ENCODE measurements at regions of chr16 and their contacts with region 1.

Region 1: DNA sequence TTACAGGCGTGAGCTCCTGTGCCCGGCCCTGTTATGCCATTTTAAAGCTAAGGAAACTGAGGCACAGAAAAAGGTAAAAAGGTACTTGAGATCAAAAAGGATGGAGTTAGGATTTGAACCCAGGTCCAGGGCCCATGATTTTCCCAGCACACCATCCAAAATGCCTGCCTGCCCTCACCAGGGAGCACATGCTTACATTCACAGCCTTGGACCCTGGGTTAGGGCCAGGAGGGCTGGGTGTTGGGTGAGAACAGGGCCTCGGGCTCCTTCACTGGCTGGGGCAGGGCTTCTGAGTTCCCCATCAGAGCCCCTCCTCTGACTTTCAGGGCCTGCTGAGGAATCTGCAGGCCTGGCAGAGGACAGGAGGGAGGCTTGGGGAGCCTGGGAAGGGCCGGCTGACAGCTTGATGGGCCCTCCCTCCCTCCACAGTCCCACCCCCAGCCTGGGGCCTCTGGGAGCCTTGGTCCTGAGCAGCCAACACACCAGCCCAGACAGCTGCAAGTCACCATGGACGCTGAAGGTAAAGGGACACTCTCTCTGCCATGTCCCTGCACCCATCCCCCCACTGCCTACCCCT is at the start of gene QPRT:
- DNase-seq: peak; percentile 85
- ATAC-seq: peak; percentile 91
- H3K4me3 ChIP-seq: peak within 1 kb of the TSS; percentile 76 to 91 (median 81)
- H3K27ac ChIP-seq: peak within 1 kb of the TSS; percentile 99
- H3K4me1 ChIP-seq: peaks cover 51% of the 10 kb centered on the region
- H3K27me3 ChIP-seq: no peaks in the 10 kb centered on the region; a peak in 1 of 5 replicates
- CTCF ChIP-seq: no peak
- EP300 ChIP-seq: no peak
- POLR2A ChIP-seq: peak; percentile 89 to 95
- RAD21 ChIP-seq: peak; percentile 44; the same call in 1 of the 2 replicates
- total RNA-seq, gene QPRT: 218 and 244 TPM in 2 replicates

Region 2: GRCh38 chr16:29645694-29646187 is 33.0 kb before region 1 on chr16:
- CTCF ChIA-PET with region 1: no interaction called
- POLR2A ChIA-PET with region 1: interaction called, 19 read pairs
- in situ Hi-C with region 1: no loop called
- intact Hi-C with region 1: no loop called
- DNase-seq: peak; percentile 89
- ATAC-seq: peak; percentile 87
- H3K4me3 ChIP-seq: peak overlapping the region in 1 of 3 experiments; percentile 14; a peak in 2 of 6 replicates
- H3K27ac ChIP-seq: peak overlapping the region; percentile 43
- H3K4me1 ChIP-seq: peaks cover 47% of the 10 kb centered on the region
- H3K27me3 ChIP-seq: no peaks in the 10 kb centered on the region; a peak in 1 of 5 replicates
- CTCF ChIP-seq: no peak
- EP300 ChIP-seq: no peak
- POLR2A ChIP-seq: peak; percentile 73 to 77
- RAD21 ChIP-seq: no peak

Region 3: DNA sequence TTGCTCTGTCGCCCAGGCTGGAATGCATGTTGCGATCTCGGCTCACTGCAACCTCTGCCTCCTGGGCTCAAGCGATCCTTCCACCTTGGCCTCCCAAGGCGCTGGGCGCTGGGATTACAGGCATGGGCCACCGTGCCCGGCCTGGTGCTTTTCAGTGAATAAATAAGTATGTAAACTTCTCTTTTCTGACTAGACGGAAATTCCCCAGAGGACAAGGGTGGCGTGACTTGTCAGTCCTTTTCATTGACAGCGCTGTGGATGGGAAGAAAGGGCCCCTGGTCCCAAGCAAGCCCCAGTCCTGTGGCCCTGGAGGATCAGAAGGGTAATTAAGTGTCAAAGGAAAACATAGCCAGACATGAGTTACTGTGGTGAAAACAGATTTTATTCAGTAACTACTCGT is 25.3 kb before region 1 on chr16:
- CTCF ChIA-PET with region 1: no interaction called
- POLR2A ChIA-PET with region 1: interaction called, 31 read pairs
- in situ Hi-C with region 1: no loop called
- intact Hi-C with region 1: no loop called
- DNase-seq: no peak
- ATAC-seq: peak; percentile 24; the same call in 1 of the 3 replicates
- H3K4me3 ChIP-seq: no peak overlapping the region
- H3K27ac ChIP-seq: no peak overlapping the region
- H3K4me1 ChIP-seq: peaks cover 48% of the 10 kb centered on the region
- H3K27me3 ChIP-seq: no peaks in the 10 kb centered on the region
- CTCF ChIP-seq: no peak
- EP300 ChIP-seq: no peak
- POLR2A ChIP-seq: no peak
- RAD21 ChIP-seq: no peak

Region 4: GRCh38 chr16:29664091-29664921 is 14.5 kb before region 1 on chr16:
- CTCF ChIA-PET with region 1: no interaction called
- POLR2A ChIA-PET with region 1: interaction called, 23 read pairs
- in situ Hi-C with region 1: no loop called
- intact Hi-C with region 1: no loop called
- DNase-seq: no peak
- ATAC-seq: peak; percentile 49
- H3K4me3 ChIP-seq: no peak overlapping the region; a peak in 1 of 6 replicates
- H3K27ac ChIP-seq: no peak overlapping the region
- H3K4me1 ChIP-seq: peaks cover 52% of the 10 kb centered on the region
- H3K27me3 ChIP-seq: no peaks in the 10 kb centered on the region
- CTCF ChIP-seq: no peak; the same call in 1 of the 2 replicates
- EP300 ChIP-seq: no peak
- POLR2A ChIP-seq: no peak
- RAD21 ChIP-seq: no peak

Region 5: GRCh38 chr16:29694384-29695195 is 15.8 kb after region 1 on chr16:
- CTCF ChIA-PET with region 1: no interaction called
- POLR2A ChIA-PET with region 1: interaction called, 37 read pairs
- in situ Hi-C with region 1: no loop called
- intact Hi-C with region 1: no loop called
- DNase-seq: no peak
- ATAC-seq: no peak; the same call in 2 of the 3 replicates
- H3K4me3 ChIP-seq: no peak overlapping the region
- H3K27ac ChIP-seq: no peak overlapping the region
- H3K4me1 ChIP-seq: peaks cover 19% of the 10 kb centered on the region
- H3K27me3 ChIP-seq: no peaks in the 10 kb centered on the region
- CTCF ChIP-seq: no peak
- EP300 ChIP-seq: no peak
- POLR2A ChIP-seq: peak in 1 of 2 experiments; percentile 25; a peak in 1 of 4 replicates
- RAD21 ChIP-seq: no peak

Region 6: DNA sequence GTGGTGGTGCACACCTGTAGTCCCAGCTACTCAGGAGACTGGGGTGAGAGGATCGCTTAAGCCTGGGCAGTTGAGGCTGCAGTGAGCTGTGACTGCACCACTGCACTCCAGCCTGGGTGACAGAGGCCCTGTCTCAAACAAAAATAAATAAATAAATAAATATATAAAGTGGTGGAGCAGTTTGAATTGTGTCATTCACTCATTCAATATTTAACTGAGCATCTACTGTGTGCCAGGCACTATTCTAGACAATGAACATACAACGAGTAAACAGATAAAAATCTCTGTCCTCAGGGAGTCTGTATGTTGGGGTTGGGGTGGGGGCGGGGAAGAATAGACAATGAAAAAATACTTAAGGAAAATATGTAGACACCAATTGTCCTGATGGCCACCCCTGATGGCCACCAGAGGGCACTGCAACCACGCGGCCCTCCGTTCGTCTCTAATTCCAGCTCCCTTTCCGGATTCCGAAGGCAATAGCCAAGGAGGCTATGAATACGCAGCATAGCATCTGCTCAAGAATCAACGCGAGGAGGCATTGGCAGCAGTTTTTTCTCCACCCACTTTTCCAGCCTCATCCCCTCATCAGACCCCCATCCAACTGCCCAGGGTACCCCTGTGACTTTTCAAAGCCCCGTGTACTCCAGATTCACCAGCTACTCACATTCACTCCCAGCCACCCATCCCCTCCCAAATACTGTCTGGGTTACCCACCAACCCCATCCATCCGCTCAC is 21.6 kb after region 1 on chr16:
- CTCF ChIA-PET with region 1: no interaction called
- POLR2A ChIA-PET with region 1: interaction called, 11 read pairs
- in situ Hi-C with region 1: no loop called
- intact Hi-C with region 1: no loop called
- DNase-seq: peak; percentile 71
- ATAC-seq: peak; percentile 64
- H3K4me3 ChIP-seq: no peak overlapping the region
- H3K27ac ChIP-seq: no peak overlapping the region
- H3K4me1 ChIP-seq: peaks cover 19% of the 10 kb centered on the region
- H3K27me3 ChIP-seq: peaks cover 0 to 4% of the 10 kb centered on the region in 2 experiments; a peak in 1 of 5 replicates
- CTCF ChIP-seq: peak; percentile 92
- EP300 ChIP-seq: no peak
- POLR2A ChIP-seq: no peak
- RAD21 ChIP-seq: peak; percentile 91

Region 7: DNA sequence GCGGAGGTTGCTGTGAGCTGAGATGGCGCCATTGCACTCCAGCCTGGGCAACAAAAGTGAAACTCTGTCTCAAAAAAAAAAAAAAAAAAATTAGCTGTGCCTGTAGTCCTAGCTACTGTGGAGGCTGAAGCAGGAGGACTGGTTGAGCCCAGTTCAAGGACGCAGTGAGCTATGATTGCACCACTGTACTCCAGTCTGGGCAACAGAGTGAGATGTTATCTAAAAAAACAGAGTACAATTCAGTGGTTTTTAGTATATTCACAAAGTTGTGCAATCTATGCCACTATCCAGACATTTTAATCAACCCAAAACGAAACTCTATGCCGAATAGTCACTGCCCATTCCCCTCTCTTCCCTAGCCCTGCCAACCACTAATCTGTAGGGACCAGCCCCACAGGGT is 41.9 kb after region 1 on chr16:
- CTCF ChIA-PET with region 1: no interaction called
- POLR2A ChIA-PET with region 1: interaction called, 11 read pairs
- in situ Hi-C with region 1: no loop called
- intact Hi-C with region 1: no loop called
- DNase-seq: peak; percentile 80
- ATAC-seq: peak; percentile 88
- H3K4me3 ChIP-seq: peak overlapping the region; percentile 28 to 53 (median 30); a peak in 5 of 6 replicates
- H3K27ac ChIP-seq: peak overlapping the region; percentile 25
- H3K4me1 ChIP-seq: peaks cover 20% of the 10 kb centered on the region
- H3K27me3 ChIP-seq: peaks cover 0 to 3% of the 10 kb centered on the region in 2 experiments; a peak in 2 of 5 replicates
- CTCF ChIP-seq: no peak; the same call in 1 of the 2 replicates
- EP300 ChIP-seq: no peak; a peak in 1 of 4 replicates
- POLR2A ChIP-seq: no peak
- RAD21 ChIP-seq: no peak

Region 8: GRCh38 chr16:30142672-30143346 is 464.0 kb after region 1 on chr16:
- CTCF ChIA-PET with region 1: no interaction called
- POLR2A ChIA-PET with region 1: no interaction called
- in situ Hi-C with region 1: no loop called
- intact Hi-C with region 1: no loop called
- DNase-seq: peak; percentile 61
- ATAC-seq: peak; percentile 26
- H3K4me3 ChIP-seq: no peak overlapping the region; a peak in 2 of 6 replicates
- H3K27ac ChIP-seq: no peak overlapping the region
- H3K4me1 ChIP-seq: peaks cover 66% of the 10 kb centered on the region
- H3K27me3 ChIP-seq: no peaks in the 10 kb centered on the region
- CTCF ChIP-seq: peak; percentile 85
- EP300 ChIP-seq: no peak
- POLR2A ChIP-seq: no peak
- RAD21 ChIP-seq: no peak